ENCODE measurements at regions of chr11 and their contacts with region 1.

Region 1: GRCh38 chr11:85595285-85595884 is 31.8 kb downstream of the DLG2 start:
- DNase-seq: no peak
- ATAC-seq: peak in 1 of 8 donors; percentile 62
- H3K4me3 ChIP-seq: no peak overlapping the region
- H3K27ac ChIP-seq: no peak overlapping the region
- H3K4me1 ChIP-seq: no peaks in the 10 kb centered on the region
- H3K27me3 ChIP-seq: no peaks in the 10 kb centered on the region
- CTCF ChIP-seq: peak; percentile 42 to 79 (median 65)

Region 2: GRCh38 chr11:84780689-84781293 is 814.6 kb before region 1 on chr11:
- intact Hi-C with region 1: loop called in 1 of 10 experiments (anchors 10 kb)
- DNase-seq: no peak
- ATAC-seq: no peak
- H3K4me3 ChIP-seq: no peak overlapping the region
- H3K27ac ChIP-seq: no peak overlapping the region
- H3K4me1 ChIP-seq: no peaks in the 10 kb centered on the region
- H3K27me3 ChIP-seq: no peaks in the 10 kb centered on the region
- CTCF ChIP-seq: peak in 8 of 9 donors; percentile 6 to 59 (median 48)

Region 3: DNA sequence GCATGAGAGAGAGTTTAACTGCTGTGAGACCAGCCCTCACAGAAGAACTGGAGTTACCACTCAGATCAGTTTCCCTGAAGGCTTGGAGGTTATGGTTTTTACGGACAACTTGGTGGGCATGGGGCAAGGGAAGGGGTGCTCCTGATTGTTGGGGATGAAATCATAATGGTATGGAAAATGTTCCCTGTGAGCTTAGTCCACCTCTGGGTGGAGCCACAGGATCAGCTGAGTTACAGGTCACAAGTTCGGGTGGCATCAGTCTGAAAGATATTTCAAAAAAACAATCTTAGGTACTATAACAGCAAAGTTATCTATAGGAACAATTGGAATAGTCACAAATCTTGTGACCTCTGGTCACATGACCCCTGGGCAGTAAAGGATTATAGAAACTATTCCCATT is 131.1 kb before region 1 on chr11:
- intact Hi-C with region 1: loop called in 1 of 10 experiments (anchors 5 kb)
- DNase-seq: no peak
- ATAC-seq: peak in 1 of 8 donors; percentile 39
- H3K4me3 ChIP-seq: no peak overlapping the region
- H3K27ac ChIP-seq: no peak overlapping the region
- H3K4me1 ChIP-seq: no peaks in the 10 kb centered on the region
- H3K27me3 ChIP-seq: no peaks in the 10 kb centered on the region
- CTCF ChIP-seq: peak in 7 of 9 donors; percentile 14 to 60 (median 32)

Region 4: GRCh38 chr11:86218125-86219084 is 623.0 kb after region 1 on chr11:
- intact Hi-C with region 1: loop called in 1 of 10 experiments (anchors 5 kb)
- DNase-seq: peak; percentile 52 to 77
- ATAC-seq: peak; percentile 83 to 96 (median 92)
- H3K4me3 ChIP-seq: peak overlapping the region in 9 of 10 donors; percentile 10 to 52 (median 40)
- H3K27ac ChIP-seq: peak overlapping the region in 3 of 10 donors; percentile 11 to 26 (median 22)
- H3K4me1 ChIP-seq: peaks cover 0 to 19% (median 7%) of the 10 kb centered on the region in 9 donors
- H3K27me3 ChIP-seq: no peaks in the 10 kb centered on the region
- CTCF ChIP-seq: peak; percentile 75 to 96 (median 91)